ENCODE measurements at regions of chr10 and their contacts with region 1.

Region 1: GRCh38 chr10:95693668-95694534 is at the start of gene TCTN3:
- DNase-seq: peak; percentile 100
- ATAC-seq: peak; percentile 96
- H3K4me3 ChIP-seq: peak within 1 kb of the TSS; percentile 87
- H3K27ac ChIP-seq: peak within 1 kb of the TSS; percentile 79
- H3K4me1 ChIP-seq: peaks cover 13% of the 10 kb centered on the region
- H3K27me3 ChIP-seq: no peaks in the 10 kb centered on the region
- CTCF ChIP-seq: peak; percentile 97 to 100 (median 99); a peak in 5 of 6 replicates
- EP300 ChIP-seq: 0 out of 4 replicates have a peak, but pooled peaks of 1 of the 2 experiments have one; percentile 11
- POLR2A ChIP-seq: peak; percentile 89
- RAD21 ChIP-seq: peak; percentile 100
- polyA plus RNA-seq, gene TCTN3: 20.0 to 24.0 TPM

Region 2: DNA sequence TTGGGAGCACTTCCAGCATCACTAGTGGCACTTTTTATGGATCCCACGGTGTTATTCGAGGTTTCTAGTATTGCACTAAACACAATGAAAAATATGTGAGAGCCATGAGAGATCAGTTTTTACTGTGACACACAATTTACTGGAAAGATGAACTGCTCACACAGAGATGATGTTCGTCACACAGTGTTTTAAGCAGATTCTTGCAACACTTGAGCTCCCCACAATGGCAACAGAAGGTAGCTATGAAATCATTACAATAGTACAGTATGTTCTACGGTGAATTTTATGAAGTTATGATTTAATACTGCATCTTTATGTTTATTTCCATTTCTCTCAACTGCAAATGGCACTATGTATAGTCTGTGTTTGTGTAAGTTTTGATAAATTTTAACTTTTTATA is 34.6 kb after region 1 on chr10:
- CTCF ChIA-PET with region 1: interaction called, 18 read pairs
- POLR2A ChIA-PET with region 1: interaction called, 3 read pairs
- RAD21 ChIA-PET with region 1: interaction called, 10 read pairs
- SMC1A ChIA-PET with region 1: interaction called, 16 read pairs
- in situ Hi-C with region 1: no loop called
- intact Hi-C with region 1: no loop called
- DNase-seq: no peak
- ATAC-seq: no peak
- H3K4me3 ChIP-seq: no peak overlapping the region
- H3K27ac ChIP-seq: no peak overlapping the region
- H3K4me1 ChIP-seq: peaks cover 7% of the 10 kb centered on the region
- H3K27me3 ChIP-seq: no peaks in the 10 kb centered on the region
- CTCF ChIP-seq: no peak
- EP300 ChIP-seq: no peak
- POLR2A ChIP-seq: no peak
- RAD21 ChIP-seq: peak; percentile 40

Region 3: GRCh38 chr10:95792874-95793285 is 99.0 kb after region 1 on chr10:
- CTCF ChIA-PET with region 1: interaction called, 12 read pairs
- POLR2A ChIA-PET with region 1: interaction called, 12 read pairs
- RAD21 ChIA-PET with region 1: interaction called, 68 read pairs
- SMC1A ChIA-PET with region 1: interaction called, 19 read pairs
- in situ Hi-C with region 1: no loop called
- intact Hi-C with region 1: loop called (anchors 1 kb)
- DNase-seq: peak; percentile 77
- ATAC-seq: peak; percentile 31
- H3K4me3 ChIP-seq: peak overlapping the region; percentile 18; the same call in 1 of the 2 replicates
- H3K27ac ChIP-seq: peak overlapping the region; percentile 93
- H3K4me1 ChIP-seq: peaks cover 64% of the 10 kb centered on the region
- H3K27me3 ChIP-seq: no peaks in the 10 kb centered on the region
- CTCF ChIP-seq: no peak
- EP300 ChIP-seq: peak; percentile 54; a peak in 1 of 4 replicates
- POLR2A ChIP-seq: no peak
- RAD21 ChIP-seq: 0 out of 2 replicates have a peak, but pooled peaks have one; percentile 4

Region 4: DNA sequence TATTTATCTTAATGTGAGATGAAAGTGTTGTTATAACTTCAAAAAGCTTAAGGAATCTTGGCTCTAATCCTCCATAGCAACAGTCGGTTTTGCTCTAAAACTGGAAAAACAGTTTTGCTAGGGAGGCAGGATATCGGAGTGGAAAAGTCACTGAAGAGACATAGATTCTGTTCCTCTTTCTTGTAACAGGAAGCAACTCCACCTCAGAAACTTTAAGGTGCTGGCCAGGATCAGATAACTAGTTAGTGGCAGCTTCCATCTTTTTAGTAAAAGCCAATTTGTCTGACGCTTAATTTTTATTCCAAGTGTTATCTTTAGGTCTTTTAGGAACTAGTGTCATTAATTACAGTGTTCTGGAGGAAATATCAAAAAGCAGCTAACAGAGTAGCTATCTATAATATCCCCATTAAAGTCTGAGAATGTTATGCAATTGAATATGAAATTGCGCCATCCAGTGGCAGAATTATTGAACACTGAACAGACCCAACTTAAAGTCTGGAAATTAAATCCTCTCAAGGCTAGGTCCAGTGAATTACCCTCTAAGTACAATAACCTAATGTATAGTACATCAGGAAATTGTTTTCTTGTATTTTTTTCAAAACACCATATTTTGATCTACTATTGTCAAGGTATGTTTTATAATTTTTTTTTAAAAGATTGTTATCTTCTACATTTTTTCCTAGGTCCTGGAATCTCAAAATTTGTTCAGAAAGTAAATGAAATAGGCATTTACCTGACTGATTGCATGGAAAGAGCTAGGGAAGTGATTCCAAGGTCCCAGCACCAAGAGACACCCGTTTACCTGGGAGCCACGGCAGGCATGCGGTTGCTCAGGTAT is 148.0 kb after region 1 on chr10:
- CTCF ChIA-PET with region 1: interaction called, 337 read pairs
- POLR2A ChIA-PET with region 1: interaction called, 72 read pairs
- RAD21 ChIA-PET with region 1: interaction called, 324 read pairs
- SMC1A ChIA-PET with region 1: interaction called, 267 read pairs
- in situ Hi-C with region 1: loop called (anchors 5 kb)
- intact Hi-C with region 1: loop called (anchors 1 kb)
- DNase-seq: no peak
- ATAC-seq: peak; percentile 53
- H3K4me3 ChIP-seq: no peak overlapping the region
- H3K27ac ChIP-seq: peak overlapping the region; percentile 98
- H3K4me1 ChIP-seq: peaks cover 43% of the 10 kb centered on the region
- H3K27me3 ChIP-seq: no peaks in the 10 kb centered on the region
- CTCF ChIP-seq: peak; percentile 37 to 71 (median 58); a peak in 4 of 6 replicates
- EP300 ChIP-seq: peak in 1 of 2 experiments; percentile 45; a peak in 1 of 4 replicates
- POLR2A ChIP-seq: no peak
- RAD21 ChIP-seq: peak; percentile 77

Region 5: DNA sequence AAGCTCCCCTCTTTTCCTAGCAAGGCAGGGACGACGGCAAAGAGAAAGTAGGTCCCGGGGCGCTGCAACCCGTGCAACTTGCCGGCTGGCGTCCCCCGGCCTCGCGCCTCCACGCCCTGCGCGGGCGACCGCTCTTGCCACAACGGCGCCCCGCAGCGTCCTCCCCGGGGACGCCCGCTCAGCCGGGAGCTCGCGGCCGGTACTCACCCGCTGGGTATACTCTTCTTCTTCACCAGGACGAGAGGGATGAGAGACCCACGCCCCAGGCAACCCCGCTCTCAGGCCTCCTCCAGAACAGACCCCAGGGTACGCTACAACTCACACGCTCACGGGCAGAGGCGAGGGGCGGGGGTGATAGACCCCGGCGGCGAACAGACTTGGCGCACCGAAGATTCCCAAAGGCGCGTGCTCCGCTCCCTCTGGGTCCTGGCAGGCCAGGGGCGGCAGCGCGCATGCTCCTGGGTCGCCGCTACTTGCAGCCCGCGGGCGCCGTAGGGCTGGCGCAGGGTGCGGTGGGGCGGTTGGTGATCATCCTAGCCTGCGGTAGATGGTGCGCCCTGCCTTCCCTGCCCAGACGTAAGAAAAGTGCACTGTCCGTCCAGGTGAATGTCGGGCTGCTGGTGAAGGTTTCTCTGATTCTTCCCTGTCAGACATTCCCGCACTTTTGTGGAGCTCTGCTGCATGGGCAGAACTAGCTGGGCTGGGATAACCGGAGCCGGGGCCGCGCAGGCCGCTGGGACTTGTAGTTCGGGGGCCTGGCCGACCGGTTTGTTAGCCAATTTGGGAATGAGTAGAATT is 213.8 kb after region 1 on chr10 and contains the start of gene CC2D2B:
- CTCF ChIA-PET with region 1: interaction called, 6 read pairs
- POLR2A ChIA-PET with region 1: interaction called, 3 read pairs
- RAD21 ChIA-PET with region 1: interaction called, 5 read pairs
- SMC1A ChIA-PET with region 1: interaction called, 16 read pairs
- in situ Hi-C with region 1: no loop called
- intact Hi-C with region 1: loop called (anchors 1 kb)
- DNase-seq: peak; percentile 27
- ATAC-seq: peak; percentile 94
- H3K4me3 ChIP-seq: peak within 1 kb of the TSS; percentile 89
- H3K27ac ChIP-seq: peak within 1 kb of the TSS; percentile 79
- H3K4me1 ChIP-seq: peaks cover 9% of the 10 kb centered on the region
- H3K27me3 ChIP-seq: no peaks in the 10 kb centered on the region
- CTCF ChIP-seq: peak; percentile 5 to 19 (median 9); a peak in 1 of 6 replicates
- EP300 ChIP-seq: no peak
- POLR2A ChIP-seq: peak; percentile 64
- RAD21 ChIP-seq: 0 out of 2 replicates have a peak, but pooled peaks have one; percentile 5
- polyA plus RNA-seq, gene CC2D2B: 0.42 to 0.58 TPM

Region 6: DNA sequence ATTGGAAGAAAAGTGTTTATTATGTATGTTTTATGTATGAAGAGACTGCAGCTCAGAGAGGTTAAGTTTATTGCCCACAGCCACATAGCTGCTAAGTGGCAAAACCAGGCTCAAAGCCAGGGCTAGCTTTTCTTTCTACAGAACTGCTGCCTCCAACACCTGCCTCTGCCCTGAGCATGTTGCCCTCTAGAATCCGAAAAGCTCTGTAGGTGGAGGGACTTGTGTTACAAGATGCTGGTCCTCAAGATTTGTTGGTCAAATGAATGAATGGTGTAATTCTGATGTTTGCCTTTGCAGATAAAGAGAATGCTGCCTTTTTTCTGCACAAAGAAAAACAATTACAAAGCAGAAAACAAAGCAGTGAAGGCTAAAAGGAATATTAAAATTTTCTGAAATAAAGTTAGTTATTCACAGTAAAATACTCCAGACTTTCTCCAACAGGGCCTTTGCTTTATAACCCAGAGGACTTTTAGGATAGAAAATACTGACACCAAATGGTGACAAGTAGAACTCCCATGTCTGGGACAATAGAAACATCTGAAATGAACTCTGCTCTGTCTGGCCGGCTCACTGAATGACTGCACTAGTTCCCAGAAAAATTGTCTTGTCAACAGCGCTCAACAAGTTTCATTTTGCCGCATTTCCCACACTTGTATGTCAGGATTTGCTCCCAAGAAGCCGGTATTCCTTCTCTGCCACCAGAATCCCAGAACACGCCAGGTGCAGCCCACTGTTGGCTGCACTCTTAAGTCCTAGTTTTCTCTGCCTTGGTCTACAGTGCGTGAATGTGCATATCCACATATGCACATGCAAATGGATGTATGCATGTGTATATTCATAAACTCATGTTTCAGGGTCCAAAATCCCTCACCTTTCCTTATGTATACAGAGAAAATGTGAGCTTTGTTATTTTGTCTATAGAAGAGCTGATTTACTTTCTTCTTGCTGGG is 599.3 kb after region 1 on chr10:
- CTCF ChIA-PET with region 1: interaction called, 22 read pairs
- POLR2A ChIA-PET with region 1: no interaction called
- RAD21 ChIA-PET with region 1: interaction called, 7 read pairs
- SMC1A ChIA-PET with region 1: interaction called, 8 read pairs
- in situ Hi-C with region 1: no loop called
- intact Hi-C with region 1: no loop called
- DNase-seq: no peak
- ATAC-seq: peak; percentile 79
- H3K4me3 ChIP-seq: no peak overlapping the region
- H3K27ac ChIP-seq: no peak overlapping the region
- H3K4me1 ChIP-seq: peaks cover 35% of the 10 kb centered on the region
- H3K27me3 ChIP-seq: no peaks in the 10 kb centered on the region
- CTCF ChIP-seq: peak; percentile 58 to 83 (median 76); a peak in 4 of 6 replicates
- EP300 ChIP-seq: no peak
- POLR2A ChIP-seq: no peak
- RAD21 ChIP-seq: peak; percentile 92

Measured in GM12878 (cell line).